PC-3 (cell line): ENCODE measurements at regions of chr17 and their contacts with region 1.

Region 1: GRCh38 chr17:46841561-46842379 is 9.6 kb upstream of the WNT9B start:
- DNase-seq: peak; percentile 46
- ATAC-seq: peak; percentile 81
- H3K4me3 ChIP-seq: peak overlapping the region; percentile 23; the same call in 1 of the 2 replicates
- H3K27ac ChIP-seq: no peak overlapping the region
- H3K4me1 ChIP-seq: no peaks in the 10 kb centered on the region
- H3K27me3 ChIP-seq: peaks cover 16% of the 10 kb centered on the region
- CTCF ChIP-seq: peak; percentile 98

Region 2: GRCh38 chr17:46940621-46941404 is 99.0 kb after region 1 on chr17:
- CTCF ChIA-PET with region 1: no interaction called
- POLR2A ChIA-PET with region 1: no interaction called
- intact Hi-C with region 1: loop called (anchors 2 kb)
- DNase-seq: peak; percentile 82
- ATAC-seq: peak; percentile 81
- H3K4me3 ChIP-seq: no peak overlapping the region
- H3K27ac ChIP-seq: no peak overlapping the region
- H3K4me1 ChIP-seq: peaks cover 11% of the 10 kb centered on the region; the same call in 1 of the 2 replicates
- H3K27me3 ChIP-seq: no peaks in the 10 kb centered on the region
- CTCF ChIP-seq: peak; percentile 93

Region 3: DNA sequence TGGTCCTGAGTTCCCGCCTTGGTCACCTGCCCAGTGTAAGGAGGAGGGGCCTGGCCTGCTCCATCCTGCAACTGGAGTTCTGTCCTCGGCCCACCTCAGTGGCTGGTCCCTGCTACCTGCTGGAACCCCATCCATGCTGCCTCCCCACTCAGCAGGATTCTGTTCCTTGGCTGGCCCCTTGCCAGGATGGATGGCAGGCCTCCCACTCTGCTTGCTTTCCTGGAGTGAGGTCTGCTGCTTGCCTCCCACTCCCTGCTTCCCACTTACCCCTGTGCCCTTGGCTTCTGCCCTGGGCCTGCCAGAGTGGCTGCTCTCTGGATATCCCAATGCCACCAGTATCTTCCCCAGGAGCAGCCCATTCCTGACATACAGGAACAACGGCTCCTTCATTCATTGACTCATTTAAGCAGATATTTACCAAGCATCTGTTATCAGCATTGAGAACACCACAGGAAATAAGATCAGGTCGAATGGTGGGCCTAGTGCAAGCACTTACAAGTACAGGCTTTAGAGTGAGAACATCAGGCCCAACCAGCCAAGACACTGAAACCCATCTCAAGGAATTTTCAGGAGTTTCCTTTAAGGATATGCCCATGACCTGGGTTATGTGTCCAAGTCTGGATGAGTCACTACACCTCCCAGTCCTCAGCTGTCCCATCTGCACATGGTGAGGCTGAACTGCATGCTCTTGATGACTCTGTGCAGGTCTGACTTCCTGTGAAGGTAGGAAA is 154.2 kb after region 1 on chr17:
- CTCF ChIA-PET with region 1: no interaction called
- POLR2A ChIA-PET with region 1: no interaction called
- intact Hi-C with region 1: loop called (anchors 2 kb)
- DNase-seq: peak; percentile 64
- ATAC-seq: peak; percentile 79
- H3K4me3 ChIP-seq: no peak overlapping the region
- H3K27ac ChIP-seq: no peak overlapping the region
- H3K4me1 ChIP-seq: peaks cover 10% of the 10 kb centered on the region
- H3K27me3 ChIP-seq: no peaks in the 10 kb centered on the region
- CTCF ChIP-seq: no peak

Region 4: DNA sequence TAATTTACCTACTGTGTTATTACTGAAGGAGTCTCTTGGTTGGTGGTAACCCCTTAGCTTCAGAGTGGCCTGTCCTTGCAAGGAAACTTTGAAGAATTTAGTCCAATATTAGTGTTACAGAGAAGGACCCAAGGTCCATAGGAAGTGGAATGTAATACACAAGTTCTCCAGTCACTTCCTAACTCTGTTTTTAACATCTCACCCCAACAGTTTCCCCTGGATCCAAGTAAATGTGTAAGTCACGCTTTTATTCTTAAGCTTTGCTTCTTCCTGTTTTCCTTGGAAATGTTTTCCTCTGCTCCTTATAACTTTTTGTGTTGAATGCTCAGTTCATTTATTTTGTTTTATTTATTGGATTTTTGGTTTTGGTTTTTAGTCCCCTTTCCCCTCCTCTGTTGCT is 163.1 kb after region 1 on chr17:
- CTCF ChIA-PET with region 1: interaction called, 14 read pairs
- POLR2A ChIA-PET with region 1: no interaction called
- intact Hi-C with region 1: loop called (anchors 2 kb)
- DNase-seq: no peak
- ATAC-seq: no peak
- H3K4me3 ChIP-seq: no peak overlapping the region
- H3K27ac ChIP-seq: no peak overlapping the region
- H3K4me1 ChIP-seq: no peaks in the 10 kb centered on the region
- H3K27me3 ChIP-seq: no peaks in the 10 kb centered on the region
- CTCF ChIP-seq: no peak